ENCODE measurements at regions of chr1 and their contacts with region 1.

Region 1: GRCh38 chr1:23184212-23184934 is 15.7 kb upstream of the LUZP1 start:
- DNase-seq: peak in 28 of 42 donors; percentile 13 to 73 (median 36)

Region 2: GRCh38 chr1:22976461-22977243 is 207.7 kb before region 1 on chr1:
- intact Hi-C with region 1: loop called (anchors 10 kb)
- DNase-seq: peak; percentile 43 to 85 (median 70)

Region 3: DNA sequence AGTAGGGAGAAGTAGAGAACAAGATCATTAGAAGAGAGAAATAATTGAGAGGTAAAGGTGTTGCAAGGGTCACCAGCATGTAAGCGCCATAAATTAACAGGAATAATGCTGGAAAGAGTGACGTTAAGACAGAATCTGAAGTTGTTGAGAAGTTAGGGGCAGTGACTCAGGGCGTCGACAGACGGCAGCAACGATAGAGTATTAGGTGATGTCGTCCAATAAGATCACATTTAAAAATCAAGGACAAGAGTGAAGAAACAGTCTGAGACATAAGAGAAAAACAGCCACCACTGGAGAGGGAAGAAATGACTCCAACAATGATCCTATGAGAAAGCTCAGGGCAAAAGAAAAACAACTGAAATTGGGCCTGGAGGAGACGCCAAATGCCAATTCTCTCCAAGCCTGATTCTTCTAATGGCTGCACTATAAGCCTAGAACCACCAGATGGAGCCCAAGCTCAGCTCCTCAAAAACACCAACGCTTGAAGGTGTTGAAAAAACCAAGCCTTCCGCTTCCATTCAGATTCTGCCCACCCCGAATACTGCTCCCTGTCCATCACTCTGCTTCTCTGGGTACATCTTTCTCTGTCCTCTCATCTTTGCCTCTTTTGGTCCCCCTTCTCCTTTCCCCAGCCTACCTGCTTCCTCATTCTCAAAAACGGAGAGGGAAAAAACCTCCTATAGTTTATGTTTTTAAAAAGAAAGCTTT is 85.8 kb before region 1 on chr1:
- intact Hi-C with region 1: loop called (anchors 2 kb)
- DNase-seq: peak in 39 of 42 donors; percentile 20 to 86 (median 69)

Region 4: DNA sequence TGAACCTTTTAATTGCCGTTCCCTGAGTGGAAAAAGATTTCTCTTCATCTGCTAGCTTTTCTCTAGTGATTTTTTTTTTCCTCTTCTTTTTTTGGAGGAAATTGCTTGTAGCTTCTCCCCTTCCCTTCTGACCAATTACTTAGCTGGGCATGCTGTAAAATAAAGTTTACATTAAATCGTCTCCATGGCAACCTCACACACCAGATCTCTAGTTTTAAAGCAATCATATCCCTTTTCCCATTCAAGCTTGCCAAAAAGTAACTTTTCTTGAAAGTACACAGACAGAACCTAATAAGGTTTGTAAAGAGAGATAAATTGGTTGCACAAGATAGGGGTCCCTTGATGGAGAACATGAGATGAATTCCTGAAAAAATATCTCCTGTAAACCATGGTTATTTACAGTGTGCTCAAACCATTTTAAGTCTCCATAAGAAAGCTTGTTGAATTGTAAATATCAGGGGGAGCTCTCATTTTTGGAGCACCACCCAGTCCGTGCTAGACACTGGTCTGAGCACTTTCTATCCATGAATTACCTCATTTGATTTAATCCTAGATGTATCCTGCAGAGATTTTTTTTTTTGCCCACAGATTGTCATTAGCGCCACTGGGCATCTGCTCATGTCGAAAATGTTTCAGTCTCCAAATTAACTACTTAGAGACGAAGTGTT is 65.5 kb after region 1 on chr1:
- intact Hi-C with region 1: no loop called
- DNase-seq: no peak